CD14-positive monocyte (primary cell): ENCODE measurements at regions of chr2 and their contacts with region 1.

Region 1: DNA sequence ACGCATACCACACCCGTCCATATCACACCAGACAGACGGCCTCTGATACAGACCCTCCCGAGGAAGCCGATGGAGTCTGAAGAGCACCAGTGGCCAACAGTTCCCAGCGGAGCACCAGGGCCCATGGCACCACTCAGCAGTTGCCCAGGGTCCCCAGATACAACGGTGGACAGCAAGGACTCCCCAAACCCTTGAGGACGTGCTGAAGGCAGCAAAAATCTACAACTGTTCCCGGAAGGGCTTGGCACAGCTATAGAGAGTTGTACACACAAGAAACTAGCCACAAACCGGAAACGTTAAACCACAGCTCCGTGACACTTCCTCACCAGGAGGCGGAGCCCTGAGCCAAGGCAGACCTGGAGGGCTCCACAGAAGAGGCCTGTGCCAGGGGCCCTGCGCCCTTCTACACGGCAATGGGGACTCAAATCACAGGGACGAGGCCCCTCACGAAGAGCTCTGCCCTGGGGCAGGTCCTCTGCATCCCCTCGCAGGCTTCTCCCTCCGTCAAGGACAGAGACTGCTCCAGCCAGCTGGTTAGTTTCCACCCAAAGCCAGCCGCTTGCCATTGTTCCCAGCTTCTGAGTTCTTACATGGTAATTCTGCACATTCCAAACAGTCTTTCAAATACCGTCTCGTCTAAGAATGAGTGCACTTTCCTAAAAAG is 133.4 kb downstream of the HDAC4 start:
- DNase-seq: peak; percentile 88 to 97 (median 92)
- H3K4me3 ChIP-seq: peak overlapping the region; percentile 66 to 92 (median 71)
- H3K4me3 Mint-ChIP-seq: peak overlapping the region; percentile 92 to 96
- H3K27ac ChIP-seq: peak overlapping the region; percentile 90 to 99
- H3K27ac Mint-ChIP-seq: peak overlapping the region; percentile 97 to 100 (median 99)
- H3K4me1 ChIP-seq: peaks cover 82 to 97% of the 10 kb centered on the region in 2 donors
- H3K4me1 Mint-ChIP-seq: peaks cover 89% of the 10 kb centered on the region
- H3K27me3 ChIP-seq: no peaks in the 10 kb centered on the region
- H3K27me3 Mint-ChIP-seq: peaks cover 0 to 5% (median 3%) of the 10 kb centered on the region in 3 donors
- CTCF ChIP-seq: peak; percentile 68

Region 2: GRCh38 chr2:239223310-239224198 is 43.9 kb before region 1 on chr2:
- intact Hi-C with region 1: loop called (anchors 5 kb)
- DNase-seq: no peak
- H3K4me3 ChIP-seq: peak overlapping the region in 1 of 3 experiments; percentile 65
- H3K4me3 Mint-ChIP-seq: peak overlapping the region; percentile 74 to 82
- H3K27ac ChIP-seq: peak overlapping the region; percentile 92 to 100
- H3K27ac Mint-ChIP-seq: peak overlapping the region; percentile 97 to 100 (median 100)
- H3K4me1 ChIP-seq: peaks cover 90 to 91% of the 10 kb centered on the region in 2 donors
- H3K4me1 Mint-ChIP-seq: peaks cover 93% of the 10 kb centered on the region
- H3K27me3 ChIP-seq: no peaks in the 10 kb centered on the region
- H3K27me3 Mint-ChIP-seq: peaks cover 0 to 2% (median 0%) of the 10 kb centered on the region in 3 donors
- CTCF ChIP-seq: no peak

Region 3: DNA sequence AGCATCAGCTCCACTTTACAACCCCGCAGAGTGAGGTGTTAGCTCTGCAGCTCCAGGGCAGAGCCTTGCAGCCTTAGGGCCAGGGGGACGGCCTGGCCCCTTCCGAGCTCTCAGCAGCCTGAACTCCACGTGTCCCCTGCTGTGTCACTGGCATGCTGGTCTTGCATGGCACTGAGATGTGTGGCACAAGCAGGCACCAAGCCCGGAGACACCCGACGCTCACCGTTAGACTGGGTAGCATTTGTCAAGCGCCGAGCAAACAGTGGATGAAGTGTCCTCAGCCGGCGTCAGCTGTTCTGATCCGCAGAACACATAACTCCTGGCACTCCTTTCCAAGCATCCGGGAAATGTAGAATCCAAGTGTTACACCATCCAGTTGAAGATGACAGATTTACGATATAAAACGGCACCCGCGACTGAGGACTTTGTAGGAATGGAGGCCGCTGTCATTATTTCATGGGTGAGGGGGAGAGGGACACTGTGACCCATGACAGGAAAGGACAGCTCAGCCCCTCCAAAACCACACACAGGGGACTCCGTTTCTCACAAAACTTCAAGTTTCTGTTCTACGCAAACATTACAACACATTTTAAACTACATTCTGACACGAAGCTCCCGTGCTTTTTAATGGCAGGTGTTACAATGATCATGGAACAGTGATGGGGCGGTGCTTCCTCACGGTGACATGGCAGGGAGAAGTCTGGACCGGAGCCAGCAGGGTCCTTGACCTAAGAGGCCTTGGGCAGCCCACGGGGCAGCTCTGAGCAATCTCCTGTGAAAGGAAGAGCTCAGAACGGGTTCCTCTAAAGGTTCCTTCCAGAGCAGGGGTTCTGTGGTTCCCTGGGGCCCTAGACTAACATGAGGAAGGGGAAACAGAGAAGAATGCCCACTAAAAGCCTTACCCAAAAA is 44.0 kb after region 1 on chr2:
- intact Hi-C with region 1: loop called (anchors 5 kb)
- DNase-seq: peak; percentile 62 to 70 (median 68)
- H3K4me3 ChIP-seq: no peak overlapping the region
- H3K4me3 Mint-ChIP-seq: peak overlapping the region in 1 of 2 donors; percentile 40
- H3K27ac ChIP-seq: peak overlapping the region; percentile 45 to 80
- H3K27ac Mint-ChIP-seq: peak overlapping the region; percentile 60 to 92 (median 86)
- H3K4me1 ChIP-seq: peaks cover 45 to 46% of the 10 kb centered on the region in 2 donors
- H3K4me1 Mint-ChIP-seq: peaks cover 53% of the 10 kb centered on the region
- H3K27me3 ChIP-seq: no peaks in the 10 kb centered on the region
- H3K27me3 Mint-ChIP-seq: peaks cover 0 to 1% (median 0%) of the 10 kb centered on the region in 3 donors
- CTCF ChIP-seq: no peak